Left cardiac atrium (tissue), 4 donors: ENCODE measurements at regions of chr17 and their contacts with region 1.

Region 1: DNA sequence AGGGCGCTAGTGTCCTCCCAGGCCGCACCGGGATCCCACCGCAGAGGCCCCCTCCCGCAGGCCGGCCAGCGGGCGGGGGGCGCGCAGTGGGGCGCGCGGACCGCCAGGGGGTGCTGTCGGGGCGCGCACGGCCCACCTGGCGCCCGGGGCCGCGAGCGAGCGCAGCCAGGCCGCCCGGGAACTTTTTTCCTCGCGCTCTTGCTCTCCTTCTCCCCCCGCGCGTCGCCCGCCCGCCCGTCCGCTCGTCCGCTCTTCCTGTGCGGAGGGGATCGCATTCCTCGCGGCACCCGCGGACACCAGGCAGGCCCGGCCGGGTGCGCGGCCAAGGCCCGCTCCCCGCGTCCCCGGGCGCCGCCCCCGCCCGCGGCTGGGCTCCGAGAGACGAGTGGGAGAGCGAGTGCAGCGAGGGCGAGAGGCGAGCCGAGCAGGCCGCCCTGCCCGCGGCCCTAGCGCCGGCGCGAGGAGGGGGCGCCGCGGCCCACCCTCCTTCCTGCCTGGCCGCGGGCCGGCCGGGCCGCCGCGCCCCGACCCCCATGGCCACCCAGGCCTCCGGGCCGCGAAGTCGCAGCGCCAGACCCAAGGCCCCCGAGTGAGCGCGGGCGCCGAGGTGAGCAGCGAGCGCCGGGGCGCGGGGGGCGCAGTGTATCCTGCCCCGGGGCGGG is at the start of gene RAI1:
- DNase-seq: peak; percentile 85
- ATAC-seq: peak; percentile 51 to 69
- total RNA-seq, gene RAI1: 22.4 to 32.3 TPM

Region 2: DNA sequence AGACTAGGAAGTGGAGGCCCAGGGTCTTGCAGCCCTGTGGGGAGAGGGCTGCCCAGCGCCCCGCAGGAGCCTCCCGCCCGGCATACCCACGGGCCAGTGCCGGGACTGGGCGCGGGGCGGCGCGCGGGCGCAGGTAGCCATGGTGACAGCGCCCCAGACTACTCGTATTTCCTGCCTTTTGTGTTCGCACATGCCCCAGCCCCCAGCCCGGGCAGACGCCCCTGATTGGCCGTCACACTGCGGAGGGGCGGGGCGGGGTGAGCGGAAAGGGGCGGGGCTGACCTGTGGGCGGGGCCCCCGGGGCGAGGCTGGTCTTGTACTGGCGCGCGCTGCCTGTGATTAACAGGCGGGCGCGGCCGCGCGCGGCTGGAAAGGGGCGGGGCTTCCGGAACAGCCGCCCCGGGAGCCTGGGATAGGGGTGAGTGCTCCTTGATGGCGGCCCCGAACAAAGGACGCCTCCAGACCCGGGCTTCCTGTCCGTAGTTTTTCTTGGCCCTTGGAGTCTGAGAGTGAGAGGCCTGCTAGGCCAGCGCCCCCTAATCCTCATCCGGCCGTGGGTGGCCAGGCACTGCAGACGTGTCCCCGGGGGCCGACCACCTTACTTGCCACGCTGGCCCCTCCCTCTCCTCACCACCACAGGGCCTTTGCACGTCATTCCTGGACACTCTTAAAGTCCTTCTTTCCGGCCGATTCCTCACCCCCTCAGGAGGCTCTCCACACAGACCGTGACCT is 70.9 kb after region 1 on chr17:
- intact Hi-C with region 1: loop called in 1 of 2 experiments (anchors 10 kb)
- DNase-seq: peak; percentile 96
- ATAC-seq: peak; percentile 94 to 95

Region 3: GRCh38 chr17:17783116-17783824 is 102.0 kb after region 1 on chr17:
- intact Hi-C with region 1: loop called in 1 of 2 experiments (anchors 10 kb)
- DNase-seq: peak; percentile 75
- ATAC-seq: peak; percentile 42 to 51

Region 4: GRCh38 chr17:17849845-17850373 is 168.6 kb after region 1 on chr17:
- intact Hi-C with region 1: no loop called
- DNase-seq: peak; percentile 60
- ATAC-seq: peak; percentile 56 to 63

Region 5: GRCh38 chr17:17859909-17860765 is 178.8 kb after region 1 on chr17:
- intact Hi-C with region 1: loop called (anchors 5 kb)
- DNase-seq: peak; percentile 73
- ATAC-seq: peak; percentile 85 to 91

Region 6: GRCh38 chr17:17919169-17920107 is 238.1 kb after region 1 on chr17:
- intact Hi-C with region 1: loop called in 1 of 2 experiments (anchors 5 kb)
- DNase-seq: peak; percentile 77
- ATAC-seq: peak; percentile 75 to 77

Region 7: DNA sequence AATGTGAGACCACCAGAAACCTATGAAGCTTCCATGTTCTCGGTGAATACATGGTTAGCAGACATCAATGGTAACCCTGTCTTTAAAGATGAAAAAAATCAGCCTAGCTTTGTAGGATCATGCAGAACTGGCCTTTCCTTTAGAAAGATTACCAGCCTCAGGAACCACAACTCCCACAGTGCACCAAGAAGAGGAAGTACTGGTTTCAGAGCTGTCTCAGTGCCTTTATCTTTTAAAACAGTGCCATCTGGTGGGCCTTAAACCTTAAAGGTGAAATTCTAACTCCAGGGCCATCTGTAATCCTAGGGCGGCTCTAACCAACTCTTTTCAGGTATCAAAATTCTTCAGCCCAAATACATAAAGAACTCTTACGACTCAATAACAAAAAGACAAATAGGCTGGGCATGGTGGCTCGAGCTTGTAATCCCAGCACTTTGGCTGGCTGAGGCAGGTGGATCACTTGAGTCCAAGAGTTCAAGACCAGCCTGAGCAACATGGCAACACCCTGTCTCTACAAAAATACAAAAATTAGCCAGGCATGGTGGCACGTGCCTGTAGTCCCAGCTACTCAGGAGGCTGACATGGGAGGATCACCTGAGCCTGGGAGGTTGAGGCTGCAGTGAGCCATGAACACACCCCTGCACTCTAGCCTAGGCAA is 352.3 kb after region 1 on chr17:
- intact Hi-C with region 1: loop called (anchors 5 kb)
- DNase-seq: no peak
- ATAC-seq: peak; percentile 83 to 88

Region 8: DNA sequence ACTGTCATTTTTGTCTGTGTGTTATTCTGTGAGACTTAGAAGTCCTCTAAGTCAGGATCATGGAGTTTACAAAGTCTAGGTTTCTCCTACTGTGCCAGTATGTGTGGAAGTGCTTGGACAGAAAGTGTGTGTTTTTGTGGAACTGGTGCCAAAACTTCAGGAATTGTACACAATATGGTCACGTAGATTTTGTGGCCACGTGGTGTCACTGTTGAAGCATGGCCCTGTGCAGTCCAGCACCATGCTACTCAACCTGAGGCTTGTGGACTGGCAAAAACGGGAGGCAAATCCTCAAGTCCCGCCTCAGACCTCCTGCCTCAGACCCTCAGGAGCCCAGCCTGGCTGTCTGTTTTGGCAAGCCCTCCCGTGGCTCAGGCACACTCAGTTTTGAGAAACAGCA is 485.6 kb after region 1 on chr17:
- intact Hi-C with region 1: no loop called
- DNase-seq: no peak
- ATAC-seq: peak in 1 of 2 donors; percentile 25